ENCODE measurements at regions of chr20 and their contacts with region 1.

Region 1: GRCh38 chr20:45293041-45294002 is 13.3 kb upstream of the RBPJL start:
- DNase-seq: no peak
- H3K4me3 ChIP-seq: peak overlapping the region; percentile 58
- H3K27ac ChIP-seq: no peak overlapping the region
- H3K27me3 ChIP-seq: peaks cover 19% of the 10 kb centered on the region
- CTCF ChIP-seq: peak; percentile 94

Region 2: DNA sequence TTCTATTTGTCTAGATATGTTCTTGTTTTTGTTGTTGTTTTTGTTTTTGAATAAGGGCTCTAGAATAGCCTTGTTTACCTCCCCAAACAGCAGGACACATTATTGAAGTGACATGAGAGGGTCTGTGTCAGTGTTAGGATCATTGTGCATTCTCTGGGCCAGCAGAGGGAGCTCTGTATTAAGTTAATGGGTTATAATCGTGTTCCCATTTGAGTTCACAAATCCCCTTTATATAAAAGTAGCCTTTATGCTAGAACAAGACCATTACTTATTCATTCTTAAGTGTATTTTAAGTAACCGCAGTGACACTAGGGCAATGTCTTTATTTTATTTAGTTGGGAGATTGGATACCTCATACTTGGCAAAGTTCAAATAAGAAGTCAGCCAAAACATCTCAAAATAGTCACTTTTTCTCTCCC is 282.2 kb before region 1 on chr20:
- CTCF ChIA-PET with region 1: interaction called, 92 read pairs
- POLR2A ChIA-PET with region 1: interaction called, 3 read pairs
- DNase-seq: peak; percentile 39
- H3K4me3 ChIP-seq: no peak overlapping the region
- H3K27ac ChIP-seq: peak overlapping the region; percentile 76
- H3K27me3 ChIP-seq: no peaks in the 10 kb centered on the region
- CTCF ChIP-seq: peak; percentile 76

Region 3: GRCh38 chr20:45104786-45105185 is 188.5 kb before region 1 on chr20:
- CTCF ChIA-PET with region 1: interaction called, 108 read pairs
- POLR2A ChIA-PET with region 1: no interaction called
- DNase-seq: no peak
- H3K4me3 ChIP-seq: no peak overlapping the region
- H3K27ac ChIP-seq: no peak overlapping the region
- H3K27me3 ChIP-seq: peaks cover 22% of the 10 kb centered on the region
- CTCF ChIP-seq: no peak

Region 4: GRCh38 chr20:45311589-45312211 is 18.4 kb after region 1 on chr20:
- CTCF ChIA-PET with region 1: interaction called, 31 read pairs
- POLR2A ChIA-PET with region 1: no interaction called
- DNase-seq: no peak
- H3K4me3 ChIP-seq: no peak overlapping the region
- H3K27ac ChIP-seq: no peak overlapping the region
- H3K27me3 ChIP-seq: peaks cover 42% of the 10 kb centered on the region
- CTCF ChIP-seq: peak; percentile 77

Region 5: DNA sequence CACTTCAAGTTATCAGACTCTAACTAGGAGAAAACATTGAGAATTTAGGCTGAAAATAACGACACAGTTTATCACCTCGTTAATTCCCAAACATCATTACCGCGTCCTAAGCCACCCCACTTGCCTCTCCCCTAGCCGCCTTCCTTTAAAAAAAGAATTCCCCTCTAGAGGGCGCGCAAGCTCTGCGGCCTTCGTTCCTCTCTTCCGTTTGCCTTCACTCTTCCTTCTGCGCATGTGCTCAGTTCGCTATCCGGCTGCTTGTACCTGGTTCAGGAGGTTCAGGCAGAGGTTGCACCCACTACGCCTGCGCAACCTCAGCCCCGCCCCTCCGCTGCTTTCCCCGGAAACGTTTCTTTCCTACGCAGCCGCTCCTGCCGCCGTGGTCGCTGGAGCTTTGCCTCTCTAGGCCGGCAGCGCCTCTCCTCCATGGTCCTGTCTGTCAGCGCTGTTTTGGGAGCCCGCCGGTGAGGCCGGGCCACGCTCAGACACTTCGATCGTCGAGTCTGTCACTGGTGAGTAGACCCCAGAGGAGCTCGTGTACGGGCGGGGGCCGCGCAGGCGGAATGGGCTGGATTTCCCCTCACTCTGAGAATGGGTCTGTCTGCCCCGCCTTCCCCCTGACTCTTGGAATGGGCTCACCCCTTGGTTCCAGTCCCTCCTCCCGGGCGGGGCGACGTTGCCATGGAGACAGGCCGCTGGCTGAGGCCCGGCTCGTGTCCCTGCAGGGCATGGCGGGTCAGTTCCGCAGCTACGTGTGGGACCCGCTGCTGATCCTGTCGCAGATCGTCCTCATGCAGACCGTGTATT is 69.7 kb after region 1 on chr20 and contains the start of gene SYS1:
- CTCF ChIA-PET with region 1: interaction called, 12 read pairs
- POLR2A ChIA-PET with region 1: no interaction called
- DNase-seq: peak; percentile 97
- H3K4me3 ChIP-seq: peak within 1 kb of the TSS; percentile 96
- H3K27ac ChIP-seq: peak within 1 kb of the TSS; percentile 97
- H3K27me3 ChIP-seq: no peaks in the 10 kb centered on the region
- CTCF ChIP-seq: peak; percentile 94
- polyA plus RNA-seq, gene SYS1: 25.1 and 33.4 TPM in 2 replicates

Measured in AG04450 (cell line).